MCF 10A (cell line): ENCODE measurements at regions of chr9 and their contacts with region 1.

Region 1: GRCh38 chr9:125746017-125746773 is 978 bp upstream of the PBX3 start:
- DNase-seq: peak; percentile 97
- H3K4me3 Mint-ChIP-seq: peak overlapping the region; percentile 84
- H3K27ac Mint-ChIP-seq: peak overlapping the region; percentile 36
- H3K4me1 Mint-ChIP-seq: peaks cover 24% of the 10 kb centered on the region
- H3K27me3 Mint-ChIP-seq: no peaks in the 10 kb centered on the region
- CTCF ChIP-seq: no peak

Region 2: GRCh38 chr9:125700791-125701190 is 45.4 kb before region 1 on chr9:
- CTCF ChIA-PET with region 1: interaction called, 3 read pairs
- POLR2A ChIA-PET with region 1: interaction called, 18 read pairs
- intact Hi-C with region 1: loop called (anchors 5 kb)
- DNase-seq: peak; percentile 7
- H3K4me3 Mint-ChIP-seq: no peak overlapping the region
- H3K27ac Mint-ChIP-seq: no peak overlapping the region
- H3K4me1 Mint-ChIP-seq: peaks cover 32% of the 10 kb centered on the region
- H3K27me3 Mint-ChIP-seq: no peaks in the 10 kb centered on the region
- CTCF ChIP-seq: no peak

Region 3: DNA sequence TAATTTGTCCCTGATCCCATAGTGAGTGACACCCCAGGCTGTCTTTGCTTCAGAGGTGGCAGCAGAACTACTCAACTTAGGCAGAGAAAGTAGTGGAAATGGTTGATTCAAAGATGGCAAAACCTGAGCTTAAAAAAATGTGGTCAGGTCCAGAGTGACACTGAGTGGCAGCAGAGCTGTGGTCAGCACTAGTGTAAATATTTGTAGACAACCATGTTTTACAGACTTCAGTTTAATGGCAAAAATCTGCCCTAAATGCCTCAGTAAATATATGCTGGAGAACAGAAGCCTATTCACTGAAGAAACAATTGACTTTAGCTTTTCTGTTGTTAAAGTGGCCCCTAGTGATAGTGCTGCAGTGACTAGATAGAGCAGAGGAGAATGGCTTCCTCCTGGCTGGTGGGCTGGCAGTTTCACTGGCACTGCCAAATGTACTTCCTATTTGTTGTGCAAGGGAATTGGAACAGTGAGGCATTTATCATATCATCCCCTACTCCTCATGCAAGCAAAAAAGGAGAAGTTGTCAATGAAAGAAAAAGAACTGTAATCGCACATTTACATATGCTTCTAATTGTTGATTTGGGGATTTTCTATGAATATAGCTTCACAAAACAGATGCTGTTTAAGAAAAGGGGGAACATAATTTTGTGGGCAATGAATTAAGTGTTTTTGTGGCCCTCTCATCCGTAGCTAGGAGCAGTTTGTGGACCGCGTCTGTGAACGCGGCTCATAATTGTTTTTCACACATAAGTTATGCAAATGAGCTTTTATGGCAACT is 13.0 kb after region 1 on chr9:
- CTCF ChIA-PET with region 1: interaction called, 3 read pairs
- POLR2A ChIA-PET with region 1: interaction called, 30 read pairs
- intact Hi-C with region 1: no loop called
- DNase-seq: no peak
- H3K4me3 Mint-ChIP-seq: no peak overlapping the region
- H3K27ac Mint-ChIP-seq: no peak overlapping the region
- H3K4me1 Mint-ChIP-seq: peaks cover 9% of the 10 kb centered on the region
- H3K27me3 Mint-ChIP-seq: no peaks in the 10 kb centered on the region
- CTCF ChIP-seq: no peak

Region 4: GRCh38 chr9:125932017-125932416 is 185.8 kb after region 1 on chr9:
- CTCF ChIA-PET with region 1: no interaction called
- POLR2A ChIA-PET with region 1: interaction called, 4 read pairs
- intact Hi-C with region 1: loop called (anchors 10 kb)
- DNase-seq: peak; percentile 99
- H3K4me3 Mint-ChIP-seq: peak overlapping the region; percentile 38
- H3K27ac Mint-ChIP-seq: peak overlapping the region; percentile 4
- H3K4me1 Mint-ChIP-seq: peaks cover 18% of the 10 kb centered on the region
- H3K27me3 Mint-ChIP-seq: no peaks in the 10 kb centered on the region
- CTCF ChIP-seq: no peak

Region 5: GRCh38 chr9:126398403-126399058 is 652.3 kb after region 1 on chr9:
- CTCF ChIA-PET with region 1: interaction called, 4 read pairs
- POLR2A ChIA-PET with region 1: no interaction called
- intact Hi-C with region 1: loop called (anchors 10 kb)
- DNase-seq: peak; percentile 68
- H3K4me3 Mint-ChIP-seq: no peak overlapping the region
- H3K27ac Mint-ChIP-seq: no peak overlapping the region
- H3K4me1 Mint-ChIP-seq: no peaks in the 10 kb centered on the region
- H3K27me3 Mint-ChIP-seq: no peaks in the 10 kb centered on the region
- CTCF ChIP-seq: peak; percentile 94